Activated CD4-positive, alpha-beta memory T cell treated with anti-CD3 and anti-CD28 coated beads for 36 hours (primary cell): ENCODE measurements at regions of chr18 and their contacts with region 1.

Region 1: DNA sequence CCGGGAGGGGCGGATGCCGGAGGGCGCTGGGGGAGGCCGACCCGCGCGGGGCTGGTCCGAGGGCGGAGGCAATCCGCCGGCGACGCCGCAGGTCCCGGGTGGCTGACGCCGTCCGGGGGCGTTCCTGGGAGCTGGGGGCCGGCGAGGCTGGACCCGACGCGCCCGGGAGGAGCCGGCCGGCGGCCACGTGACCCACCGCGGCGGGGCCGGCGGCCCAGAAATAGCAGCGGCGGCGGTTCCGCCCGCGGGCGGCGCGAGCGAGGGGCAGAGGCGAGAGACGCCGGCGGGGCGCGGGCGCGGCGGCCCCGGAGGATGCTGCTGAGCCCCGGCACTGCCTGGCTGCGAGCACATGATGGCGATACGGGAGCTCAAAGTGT is at the start of gene RAB31:
- DNase-seq: peak; percentile 24
- H3K4me3 Mint-ChIP-seq: peak within 1 kb of the TSS; percentile 73
- H3K27ac Mint-ChIP-seq: no peak within 1 kb of the TSS
- H3K4me1 Mint-ChIP-seq: peaks cover 31% of the 10 kb centered on the region
- H3K27me3 Mint-ChIP-seq: peaks cover 76% of the 10 kb centered on the region
- total RNA-seq, gene RAB31: 0.58 to 0.71 TPM

Region 2: DNA sequence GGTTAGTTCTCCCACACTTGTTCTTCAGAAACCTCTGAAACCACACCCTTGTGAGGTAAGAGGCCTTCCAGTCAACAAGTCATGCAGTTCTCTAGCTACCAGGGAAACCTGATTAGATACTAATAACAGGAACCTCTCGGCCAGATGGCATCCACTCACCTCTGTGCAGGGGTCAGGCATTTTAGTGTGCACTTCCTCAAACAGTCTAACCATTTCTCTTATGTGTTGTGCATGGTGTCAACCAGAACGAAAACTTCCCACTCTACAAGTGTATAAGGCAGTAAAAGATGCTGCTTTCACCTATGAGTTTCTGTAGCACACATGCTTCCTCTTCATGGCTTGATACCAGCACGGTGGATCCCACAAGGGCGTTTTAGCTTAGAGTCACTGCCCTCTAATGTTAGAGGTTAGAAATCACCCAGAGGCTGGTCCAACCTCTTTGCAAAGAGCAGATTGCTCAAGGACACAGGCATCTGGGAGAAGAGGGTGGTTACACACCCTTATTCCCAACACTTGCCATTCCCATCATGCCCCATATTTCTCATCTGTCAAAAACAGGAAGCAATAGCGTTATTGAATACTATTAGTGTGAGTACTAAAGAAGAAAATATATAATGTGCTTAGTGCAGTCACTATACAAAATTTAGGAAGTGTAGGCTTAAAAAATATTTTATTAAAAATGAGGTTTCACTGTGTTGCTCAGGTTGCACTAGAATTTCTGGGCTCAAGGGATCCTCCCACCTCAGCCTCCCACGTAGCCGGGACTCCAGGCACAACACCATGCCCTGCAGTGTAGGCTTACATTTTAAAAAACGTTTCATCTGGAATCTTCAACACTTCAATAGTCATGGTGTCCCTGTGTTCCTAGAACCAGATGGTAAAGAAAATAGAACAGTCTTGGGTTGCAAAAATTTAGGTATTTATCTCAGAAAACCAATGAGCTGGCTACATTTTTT is 34.5 kb before region 1 on chr18:
- CTCF ChIA-PET with region 1: no interaction called
- POLR2A ChIA-PET with region 1: no interaction called
- intact Hi-C with region 1: loop called (anchors 2 kb)
- DNase-seq: peak; percentile 54
- H3K4me3 Mint-ChIP-seq: no peak overlapping the region
- H3K27ac Mint-ChIP-seq: peak overlapping the region; percentile 78
- H3K4me1 Mint-ChIP-seq: peaks cover 6% of the 10 kb centered on the region
- H3K27me3 Mint-ChIP-seq: peaks cover 10% of the 10 kb centered on the region

Region 3: DNA sequence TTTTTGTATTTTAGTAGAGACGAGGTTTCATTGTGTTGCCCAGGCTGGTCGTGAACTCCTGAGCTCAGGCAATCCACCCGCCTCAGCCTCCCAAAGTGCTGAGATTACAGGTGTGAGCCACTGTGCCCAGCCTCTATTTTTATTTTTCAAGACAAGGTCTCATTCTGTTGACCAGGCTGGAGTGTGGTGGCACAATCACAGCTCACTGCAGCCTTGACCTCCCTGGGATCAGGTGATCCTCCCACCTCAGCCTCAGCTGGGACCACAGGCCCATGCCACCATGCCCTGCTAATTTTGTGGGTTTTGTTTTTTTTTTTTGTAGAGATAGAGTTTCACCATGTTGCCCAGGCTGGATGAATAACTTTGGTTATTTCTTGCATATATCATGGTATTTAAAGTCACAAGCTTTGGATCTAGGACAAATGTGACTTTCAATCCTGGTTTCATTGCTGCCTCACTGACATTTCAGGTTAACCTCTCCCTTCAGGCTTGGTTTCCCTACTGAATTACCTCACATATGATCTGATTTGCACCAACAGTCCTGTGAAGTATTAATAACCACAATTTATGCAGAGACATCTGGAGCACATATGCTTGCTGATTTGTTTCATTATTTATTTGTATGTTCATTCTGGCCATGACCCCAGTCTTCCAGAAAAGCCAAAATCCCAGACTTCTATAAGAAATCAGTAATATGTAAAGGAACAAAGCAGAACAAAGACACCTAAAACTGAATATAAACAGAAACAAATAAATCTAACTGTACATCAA is 17.4 kb before region 1 on chr18:
- CTCF ChIA-PET with region 1: no interaction called
- POLR2A ChIA-PET with region 1: no interaction called
- intact Hi-C with region 1: no loop called
- DNase-seq: no peak
- H3K4me3 Mint-ChIP-seq: no peak overlapping the region
- H3K27ac Mint-ChIP-seq: no peak overlapping the region
- H3K4me1 Mint-ChIP-seq: peaks cover under 1% of the 10 kb centered on the region
- H3K27me3 Mint-ChIP-seq: peaks cover 12% of the 10 kb centered on the region

Region 4: DNA sequence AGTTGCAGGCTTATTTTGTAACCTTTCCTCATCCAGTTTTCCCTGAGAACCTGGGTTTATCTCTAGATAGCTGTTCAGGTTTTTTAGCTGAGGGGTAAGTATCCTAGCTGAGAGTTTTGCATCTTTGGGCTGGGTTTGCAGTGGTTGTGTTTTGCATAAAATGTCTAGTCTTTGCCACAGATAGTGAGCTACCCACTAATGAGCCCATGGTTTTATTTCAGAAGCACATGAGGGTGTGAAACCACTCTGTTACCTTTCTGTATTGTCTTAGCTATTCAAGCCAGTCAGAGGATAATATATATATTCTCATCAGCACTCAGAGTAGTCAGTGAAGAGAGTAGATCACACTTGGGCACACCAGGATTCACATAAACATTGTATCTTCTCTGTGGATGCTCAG is 153.1 kb after region 1 on chr18:
- CTCF ChIA-PET with region 1: no interaction called
- POLR2A ChIA-PET with region 1: no interaction called
- intact Hi-C with region 1: loop called (anchors 5 kb)
- DNase-seq: no peak
- H3K4me3 Mint-ChIP-seq: no peak overlapping the region
- H3K27ac Mint-ChIP-seq: no peak overlapping the region
- H3K4me1 Mint-ChIP-seq: peaks cover 19% of the 10 kb centered on the region
- H3K27me3 Mint-ChIP-seq: peaks cover 29% of the 10 kb centered on the region